Activated CD4-positive, alpha-beta T cell treated with anti-CD3 and anti-CD28 coated beads for 36 hours (primary cell): ENCODE measurements at regions of chr17 and their contacts with region 1.

Region 1: GRCh38 chr17:49715717-49716279 is 8.0 kb upstream of the SLC35B1 start:
- DNase-seq: peak; percentile 68
- ATAC-seq: peak; percentile 39
- H3K4me3 Mint-ChIP-seq: peak overlapping the region; percentile 7
- H3K27ac Mint-ChIP-seq: peak overlapping the region; percentile 90
- H3K4me1 Mint-ChIP-seq: peaks cover 41% of the 10 kb centered on the region
- H3K27me3 Mint-ChIP-seq: no peaks in the 10 kb centered on the region

Region 2: DNA sequence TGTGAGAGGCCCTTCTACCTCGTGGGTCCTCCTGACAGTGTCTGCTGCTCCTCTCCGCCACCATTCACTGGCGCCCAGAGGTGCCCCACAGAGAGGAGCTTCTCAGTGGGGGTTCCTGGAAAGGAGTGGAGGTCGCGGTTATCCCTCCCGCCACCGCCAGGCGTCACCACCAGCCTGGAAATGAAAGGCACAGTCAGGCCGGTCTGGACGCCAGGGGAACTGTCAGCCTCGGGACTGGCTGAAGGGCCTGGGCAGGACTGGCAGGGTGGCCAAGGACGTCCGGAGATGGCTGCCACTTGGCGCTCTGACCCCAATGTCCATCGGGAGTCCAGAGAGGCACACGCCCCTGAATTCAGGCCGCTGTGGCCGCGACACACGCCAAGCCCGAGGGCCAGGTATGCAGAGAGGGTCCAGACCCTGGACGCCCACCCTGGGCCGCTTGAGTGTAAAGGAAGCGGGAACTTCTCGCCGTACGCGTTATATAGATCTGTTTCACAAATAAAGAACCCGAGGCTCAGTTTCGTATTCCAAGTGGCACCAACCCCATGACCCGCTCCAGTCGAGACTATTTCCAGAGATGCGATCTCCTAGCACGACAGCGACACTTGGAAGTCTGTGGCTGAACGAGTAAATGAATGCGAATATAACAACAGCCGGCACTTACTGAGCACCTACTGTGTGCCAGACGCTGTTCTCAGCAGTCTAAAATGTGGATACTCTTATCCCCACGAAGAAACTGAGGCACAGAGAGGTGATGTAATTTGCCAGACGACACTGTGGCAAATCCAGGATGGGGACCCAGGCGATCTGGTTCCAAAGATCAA is 147.7 kb before region 1 on chr17:
- CTCF ChIA-PET with region 1: interaction called, 10 read pairs
- POLR2A ChIA-PET with region 1: no interaction called
- intact Hi-C with region 1: no loop called
- DNase-seq: peak; percentile 91
- ATAC-seq: peak; percentile 49
- H3K4me3 Mint-ChIP-seq: peak overlapping the region; percentile 56
- H3K27ac Mint-ChIP-seq: no peak overlapping the region
- H3K4me1 Mint-ChIP-seq: peaks cover 14% of the 10 kb centered on the region
- H3K27me3 Mint-ChIP-seq: peaks cover 19% of the 10 kb centered on the region

Region 3: DNA sequence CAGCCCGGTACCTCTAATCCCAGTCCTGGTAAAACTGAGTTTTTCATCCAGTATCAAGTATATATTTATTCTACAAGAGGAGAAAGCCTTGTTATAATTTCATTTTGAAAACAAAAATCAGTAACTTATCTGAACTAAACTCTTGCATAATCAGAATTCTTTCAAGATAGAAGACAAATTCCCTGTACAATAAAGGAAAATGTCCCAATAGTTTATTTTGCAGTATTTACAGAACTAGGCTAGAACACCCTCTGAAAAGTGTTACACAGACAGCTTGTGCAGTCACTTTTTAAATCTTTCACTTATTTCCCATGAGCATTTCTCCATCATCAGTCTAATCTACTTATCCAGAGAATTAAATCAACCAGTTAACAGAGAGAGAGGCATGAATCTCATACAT is 86.4 kb before region 1 on chr17:
- CTCF ChIA-PET with region 1: no interaction called
- POLR2A ChIA-PET with region 1: no interaction called
- intact Hi-C with region 1: no loop called
- DNase-seq: no peak
- ATAC-seq: no peak
- H3K4me3 Mint-ChIP-seq: no peak overlapping the region
- H3K27ac Mint-ChIP-seq: no peak overlapping the region
- H3K4me1 Mint-ChIP-seq: peaks cover 41% of the 10 kb centered on the region
- H3K27me3 Mint-ChIP-seq: no peaks in the 10 kb centered on the region

Region 4: GRCh38 chr17:49694847-49695683 is 20.7 kb before region 1 on chr17:
- CTCF ChIA-PET with region 1: interaction called, 14 read pairs
- POLR2A ChIA-PET with region 1: interaction called, 5 read pairs
- intact Hi-C with region 1: no loop called
- DNase-seq: peak; percentile 85
- ATAC-seq: no peak
- H3K4me3 Mint-ChIP-seq: no peak overlapping the region
- H3K27ac Mint-ChIP-seq: peak overlapping the region; percentile 90
- H3K4me1 Mint-ChIP-seq: peaks cover 36% of the 10 kb centered on the region
- H3K27me3 Mint-ChIP-seq: no peaks in the 10 kb centered on the region

Region 5: DNA sequence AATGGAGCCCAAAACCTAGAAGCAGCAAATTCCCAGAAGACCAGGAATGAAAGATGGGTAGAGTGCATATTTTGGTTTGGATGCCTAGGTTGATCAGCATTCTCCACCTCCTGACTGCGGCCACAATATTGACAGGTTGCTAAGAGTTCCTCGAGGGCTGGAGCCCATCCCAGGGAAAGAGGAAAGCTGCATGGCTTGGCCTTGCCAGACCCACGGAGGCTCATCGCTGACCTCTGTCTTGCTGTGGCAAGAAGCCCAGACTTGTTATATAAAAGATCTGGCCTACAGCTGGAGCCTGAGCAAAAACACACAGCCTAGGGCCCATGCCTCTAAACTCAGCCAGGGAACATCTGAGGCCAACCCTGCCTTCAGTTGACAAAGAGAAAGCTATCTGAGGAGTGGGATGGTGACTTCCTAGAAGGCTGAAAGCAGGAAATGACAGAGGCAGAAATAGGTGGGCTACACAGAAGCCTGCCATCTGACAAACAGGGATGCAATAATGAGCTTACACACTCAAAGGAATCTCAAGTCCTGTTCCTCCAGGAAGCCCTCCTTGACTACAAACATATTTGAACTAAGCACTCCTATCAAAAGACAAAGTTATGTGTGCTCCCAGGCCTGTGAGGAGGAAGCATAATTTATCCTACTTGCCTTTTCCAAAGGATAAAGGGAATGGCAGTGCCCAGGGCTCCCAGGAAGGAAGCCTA is 14.4 kb after region 1 on chr17:
- CTCF ChIA-PET with region 1: interaction called, 12 read pairs
- POLR2A ChIA-PET with region 1: no interaction called
- intact Hi-C with region 1: no loop called
- DNase-seq: no peak
- ATAC-seq: no peak
- H3K4me3 Mint-ChIP-seq: no peak overlapping the region
- H3K27ac Mint-ChIP-seq: no peak overlapping the region
- H3K4me1 Mint-ChIP-seq: peaks cover 51% of the 10 kb centered on the region
- H3K27me3 Mint-ChIP-seq: no peaks in the 10 kb centered on the region

Region 6: DNA sequence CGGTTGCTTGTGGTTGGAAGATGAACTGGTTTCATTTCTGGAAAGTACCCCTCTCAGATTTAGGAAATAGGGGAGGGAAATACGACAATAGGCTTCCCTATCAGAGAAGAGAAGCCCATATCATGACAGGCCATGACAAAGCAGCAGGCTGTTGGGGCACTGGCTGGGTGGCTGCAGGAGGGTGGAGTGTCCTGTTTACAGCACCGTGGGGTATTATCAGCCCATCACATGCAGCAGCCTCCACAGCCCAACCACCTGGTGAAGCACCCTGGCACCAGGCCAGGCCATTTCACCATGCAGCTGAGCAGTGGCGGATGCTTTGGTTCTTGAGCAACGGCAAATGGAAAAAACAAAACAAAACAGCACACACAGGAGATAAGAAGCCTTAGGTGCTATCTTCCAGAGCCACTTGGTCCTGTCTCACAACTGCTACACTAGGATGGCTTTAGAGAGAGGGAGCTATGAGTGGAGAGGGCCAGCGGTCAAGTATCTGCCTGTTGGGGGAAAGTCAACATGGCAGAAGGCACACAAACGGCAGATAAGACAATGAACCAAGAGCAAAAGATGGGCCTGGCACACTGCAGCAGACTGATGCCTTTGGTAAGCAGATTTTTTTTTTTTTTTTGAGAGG is 24.0 kb after region 1 on chr17:
- CTCF ChIA-PET with region 1: interaction called, 15 read pairs
- POLR2A ChIA-PET with region 1: no interaction called
- intact Hi-C with region 1: loop called (anchors 1 to 2 kb)
- DNase-seq: peak; percentile 90
- ATAC-seq: peak; percentile 88
- H3K4me3 Mint-ChIP-seq: peak overlapping the region; percentile 74
- H3K27ac Mint-ChIP-seq: peak overlapping the region; percentile 99
- H3K4me1 Mint-ChIP-seq: peaks cover 75% of the 10 kb centered on the region
- H3K27me3 Mint-ChIP-seq: no peaks in the 10 kb centered on the region

Region 7: GRCh38 chr17:49748791-49749190 is 33.0 kb after region 1 on chr17:
- CTCF ChIA-PET with region 1: interaction called, 5 read pairs
- POLR2A ChIA-PET with region 1: no interaction called
- intact Hi-C with region 1: loop called in 1 of 2 experiments (anchors 1 kb)
- DNase-seq: peak; percentile 76
- ATAC-seq: peak; percentile 89
- H3K4me3 Mint-ChIP-seq: peak overlapping the region; percentile 35
- H3K27ac Mint-ChIP-seq: peak overlapping the region; percentile 88
- H3K4me1 Mint-ChIP-seq: peaks cover 77% of the 10 kb centered on the region
- H3K27me3 Mint-ChIP-seq: no peaks in the 10 kb centered on the region

Region 8: GRCh38 chr17:49763735-49764558 is 48.1 kb after region 1 on chr17 and contains the start of gene FAM117A:
- CTCF ChIA-PET with region 1: interaction called, 34 read pairs
- POLR2A ChIA-PET with region 1: interaction called, 17 read pairs
- intact Hi-C with region 1: no loop called
- DNase-seq: peak; percentile 98
- ATAC-seq: peak; percentile 97
- H3K4me3 Mint-ChIP-seq: peak within 1 kb of the TSS; percentile 89
- H3K27ac Mint-ChIP-seq: peak within 1 kb of the TSS; percentile 88
- H3K4me1 Mint-ChIP-seq: peaks cover 52% of the 10 kb centered on the region
- H3K27me3 Mint-ChIP-seq: no peaks in the 10 kb centered on the region
- total RNA-seq, gene FAM117A: 14.1 to 15.4 TPM